ENCODE measurements at regions of chr2 and their contacts with region 1.

Region 1: GRCh38 chr2:64865073-64865830 is 123.9 kb upstream of the SLC1A4 start:
- DNase-seq: peak; percentile 76
- ATAC-seq: peak; percentile 56
- H3K4me3 Mint-ChIP-seq: peak overlapping the region; percentile 41
- H3K27ac Mint-ChIP-seq: no peak overlapping the region
- H3K4me1 Mint-ChIP-seq: peaks cover 6% of the 10 kb centered on the region
- H3K27me3 Mint-ChIP-seq: no peaks in the 10 kb centered on the region
- CTCF ChIP-seq: no peak

Region 2: GRCh38 chr2:64474121-64474571 is 391.1 kb before region 1 on chr2:
- CTCF ChIA-PET with region 1: no interaction called
- POLR2A ChIA-PET with region 1: no interaction called
- intact Hi-C with region 1: no loop called
- DNase-seq: no peak
- ATAC-seq: peak; percentile 84
- H3K4me3 Mint-ChIP-seq: peak overlapping the region; percentile 45
- H3K27ac Mint-ChIP-seq: peak overlapping the region; percentile 44
- H3K4me1 Mint-ChIP-seq: peaks cover 13% of the 10 kb centered on the region
- H3K27me3 Mint-ChIP-seq: no peaks in the 10 kb centered on the region
- CTCF ChIP-seq: no peak

Region 3: GRCh38 chr2:64586883-64587481 is 278.3 kb before region 1 on chr2:
- CTCF ChIA-PET with region 1: interaction called, 25 read pairs
- POLR2A ChIA-PET with region 1: interaction called, 6 read pairs
- intact Hi-C with region 1: loop called (anchors 1 kb)
- DNase-seq: no peak
- ATAC-seq: peak; percentile 62
- H3K4me3 Mint-ChIP-seq: no peak overlapping the region
- H3K27ac Mint-ChIP-seq: peak overlapping the region; percentile 50
- H3K4me1 Mint-ChIP-seq: peaks cover 17% of the 10 kb centered on the region
- H3K27me3 Mint-ChIP-seq: no peaks in the 10 kb centered on the region
- CTCF ChIP-seq: peak; percentile 77

Region 4: GRCh38 chr2:64661741-64662169 is 203.5 kb before region 1 on chr2:
- CTCF ChIA-PET with region 1: interaction called, 8 read pairs
- POLR2A ChIA-PET with region 1: interaction called, 276 read pairs
- intact Hi-C with region 1: no loop called
- DNase-seq: no peak
- ATAC-seq: peak; percentile 28
- H3K4me3 Mint-ChIP-seq: peak overlapping the region; percentile 56
- H3K27ac Mint-ChIP-seq: peak overlapping the region; percentile 88
- H3K4me1 Mint-ChIP-seq: peaks cover 72% of the 10 kb centered on the region
- H3K27me3 Mint-ChIP-seq: no peaks in the 10 kb centered on the region
- CTCF ChIP-seq: no peak

Region 5: DNA sequence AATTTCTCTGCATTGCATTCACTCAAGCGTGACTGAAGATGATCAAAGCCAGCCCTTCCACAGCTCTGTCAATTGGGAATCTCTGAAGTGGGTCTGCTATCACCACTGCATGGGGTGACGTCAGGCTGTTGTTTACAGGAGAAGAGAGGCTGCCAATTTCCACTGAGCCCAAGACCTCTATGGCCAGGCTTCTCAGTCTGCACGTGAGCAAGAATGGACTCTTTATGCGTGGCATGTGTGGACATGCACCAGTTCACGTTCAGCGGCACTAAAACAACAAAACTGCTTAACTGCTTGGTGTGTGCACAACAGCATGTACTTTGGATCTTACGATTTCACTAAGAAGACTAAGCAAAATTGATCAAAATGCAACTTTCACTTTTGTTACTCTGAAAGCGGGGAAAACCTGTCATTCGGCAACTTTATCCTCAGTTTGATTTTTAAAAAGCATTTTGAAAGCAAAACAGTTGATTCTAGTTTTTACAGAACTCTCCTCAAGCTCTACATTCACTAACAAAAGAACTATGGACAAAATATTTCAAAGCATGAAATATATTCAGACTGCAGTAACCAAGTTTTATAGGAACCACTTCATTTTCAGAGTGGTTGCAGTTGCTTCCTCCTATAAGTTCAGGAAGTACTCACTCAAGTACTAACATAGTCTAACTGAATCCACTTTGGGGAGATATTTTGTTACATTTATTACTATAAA is 134.5 kb before region 1 on chr2:
- CTCF ChIA-PET with region 1: no interaction called
- POLR2A ChIA-PET with region 1: interaction called, 24 read pairs
- intact Hi-C with region 1: loop called (anchors 2 kb)
- DNase-seq: peak; percentile 24
- ATAC-seq: peak; percentile 45
- H3K4me3 Mint-ChIP-seq: peak overlapping the region; percentile 84
- H3K27ac Mint-ChIP-seq: peak overlapping the region; percentile 91
- H3K4me1 Mint-ChIP-seq: peaks cover 66% of the 10 kb centered on the region
- H3K27me3 Mint-ChIP-seq: no peaks in the 10 kb centered on the region
- CTCF ChIP-seq: no peak

Region 6: DNA sequence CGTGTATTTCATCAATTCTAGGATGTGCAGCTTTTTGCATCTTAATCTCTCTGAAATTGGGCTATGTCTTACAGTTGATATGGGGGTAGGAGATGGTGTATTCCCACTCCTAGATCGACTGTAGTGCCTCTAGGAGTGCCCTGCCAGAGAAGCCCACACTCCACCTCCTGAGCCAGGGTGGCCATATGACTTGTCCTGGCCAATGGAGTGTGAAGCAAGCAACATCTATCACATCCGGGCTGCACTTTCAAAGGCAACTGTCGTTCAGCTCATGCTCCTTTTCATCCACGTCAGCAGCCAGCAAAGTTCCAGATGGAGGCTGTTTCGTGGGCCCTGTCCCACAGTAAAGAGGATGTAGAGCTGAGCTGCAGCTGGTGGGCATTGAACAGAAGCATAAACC is 25.4 kb before region 1 on chr2:
- CTCF ChIA-PET with region 1: interaction called, 11 read pairs
- POLR2A ChIA-PET with region 1: interaction called, 81 read pairs
- intact Hi-C with region 1: loop called (anchors 1 kb)
- DNase-seq: no peak
- ATAC-seq: peak; percentile 92
- H3K4me3 Mint-ChIP-seq: peak overlapping the region; percentile 61
- H3K27ac Mint-ChIP-seq: peak overlapping the region; percentile 92
- H3K4me1 Mint-ChIP-seq: peaks cover 51% of the 10 kb centered on the region
- H3K27me3 Mint-ChIP-seq: no peaks in the 10 kb centered on the region
- CTCF ChIP-seq: no peak

Measured in activated B cell treated with CpG ODN at 0.5 μM for 24 hours (primary cell).